ENCODE measurements at regions of chr5 and their contacts with region 1.

Region 1: DNA sequence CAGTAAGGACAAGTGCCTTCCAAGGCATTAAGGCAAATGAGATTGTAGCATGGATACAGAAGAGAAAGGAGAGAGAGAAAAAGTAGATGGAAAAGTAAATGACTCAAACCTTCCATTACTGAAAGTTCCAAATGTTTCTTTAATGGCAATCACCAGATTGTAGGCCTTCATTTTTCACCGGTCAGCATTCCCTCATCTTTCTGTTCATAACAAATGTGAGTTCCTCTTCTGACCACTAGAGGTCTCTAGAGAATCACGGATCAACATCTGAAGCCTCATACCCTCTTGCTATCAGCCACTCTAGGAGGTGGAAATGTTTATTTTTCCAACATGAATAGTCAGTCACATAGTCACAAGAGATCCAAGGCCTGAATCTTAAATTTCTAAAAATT is 73.6 kb upstream of the RPS23 start:
- DNase-seq: no peak
- H3K4me3 ChIP-seq: no peak overlapping the region
- H3K27ac ChIP-seq: no peak overlapping the region
- H3K4me1 ChIP-seq: no peaks in the 10 kb centered on the region
- H3K27me3 ChIP-seq: no peaks in the 10 kb centered on the region
- CTCF ChIP-seq: peak; percentile 73

Region 2: GRCh38 chr5:82225525-82226172 is 126.1 kb before region 1 on chr5:
- intact Hi-C with region 1: no loop called
- DNase-seq: peak; percentile 73
- H3K4me3 ChIP-seq: no peak overlapping the region
- H3K27ac ChIP-seq: no peak overlapping the region
- H3K4me1 ChIP-seq: no peaks in the 10 kb centered on the region
- H3K27me3 ChIP-seq: no peaks in the 10 kb centered on the region
- CTCF ChIP-seq: peak; percentile 79

Region 3: GRCh38 chr5:82641331-82642003 is 289.7 kb after region 1 on chr5:
- intact Hi-C with region 1: loop called (anchors 10 kb)
- DNase-seq: peak; percentile 84
- H3K4me3 ChIP-seq: no peak overlapping the region
- H3K27ac ChIP-seq: no peak overlapping the region
- H3K4me1 ChIP-seq: peaks cover 4% of the 10 kb centered on the region
- H3K27me3 ChIP-seq: no peaks in the 10 kb centered on the region
- CTCF ChIP-seq: peak; percentile 60

Region 4: GRCh38 chr5:82720213-82721086 is 368.7 kb after region 1 on chr5:
- intact Hi-C with region 1: no loop called
- DNase-seq: no peak
- H3K4me3 ChIP-seq: no peak overlapping the region
- H3K27ac ChIP-seq: no peak overlapping the region
- H3K4me1 ChIP-seq: no peaks in the 10 kb centered on the region
- H3K27me3 ChIP-seq: no peaks in the 10 kb centered on the region
- CTCF ChIP-seq: no peak

Region 5: GRCh38 chr5:82793808-82794419 is 442.2 kb after region 1 on chr5:
- intact Hi-C with region 1: loop called (anchors 5 kb)
- DNase-seq: peak; percentile 51
- H3K4me3 ChIP-seq: no peak overlapping the region
- H3K27ac ChIP-seq: no peak overlapping the region
- H3K4me1 ChIP-seq: no peaks in the 10 kb centered on the region
- H3K27me3 ChIP-seq: no peaks in the 10 kb centered on the region
- CTCF ChIP-seq: peak; percentile 68

Region 6: GRCh38 chr5:83430130-83431010 is 1078.6 kb after region 1 on chr5:
- intact Hi-C with region 1: loop called (anchors 5 kb)
- DNase-seq: peak; percentile 53
- H3K4me3 ChIP-seq: no peak overlapping the region
- H3K27ac ChIP-seq: no peak overlapping the region
- H3K4me1 ChIP-seq: no peaks in the 10 kb centered on the region
- H3K27me3 ChIP-seq: no peaks in the 10 kb centered on the region
- CTCF ChIP-seq: peak; percentile 84

Region 7: DNA sequence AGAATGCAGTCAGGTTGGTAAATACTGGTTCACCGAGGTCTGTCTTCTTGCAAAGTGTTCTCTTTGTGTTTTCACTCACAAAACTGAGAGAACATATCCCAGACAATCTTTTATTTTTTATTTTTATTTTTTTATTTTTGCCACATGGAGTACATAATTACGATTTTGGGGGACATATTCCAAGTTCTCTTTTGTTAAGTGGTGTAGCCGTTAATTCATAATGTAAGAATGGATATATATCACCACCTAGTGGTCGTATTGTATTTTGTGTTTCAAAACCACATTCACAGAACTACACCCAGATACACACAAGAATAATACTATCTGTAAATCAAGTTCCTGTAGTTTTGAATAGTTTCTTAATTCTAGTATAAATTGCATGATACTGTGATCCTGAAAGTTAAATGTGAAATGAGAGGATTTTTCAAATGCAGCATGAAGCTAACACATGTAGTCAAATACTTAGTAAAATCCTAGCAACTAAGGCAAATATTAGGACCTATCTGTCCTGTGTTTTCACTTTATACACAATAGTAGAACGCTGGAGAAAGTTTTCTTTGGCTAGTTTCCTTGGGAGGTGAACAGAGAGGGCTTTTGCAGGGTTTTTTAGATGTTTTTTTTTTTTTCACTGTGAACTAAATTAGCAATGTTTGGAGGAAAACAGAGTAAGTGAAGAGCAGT is 1212.5 kb after region 1 on chr5:
- intact Hi-C with region 1: loop called (anchors 5 kb)
- DNase-seq: no peak
- H3K4me3 ChIP-seq: no peak overlapping the region
- H3K27ac ChIP-seq: no peak overlapping the region
- H3K4me1 ChIP-seq: no peaks in the 10 kb centered on the region
- H3K27me3 ChIP-seq: no peaks in the 10 kb centered on the region
- CTCF ChIP-seq: peak; percentile 64

Measured in colonic mucosa (tissue), 4 donors.